ENCODE measurements at regions of chr6 and their contacts with region 1.

Region 1: GRCh38 chr6:72619883-72620696 is 1.8 kb upstream of the KCNQ5 start:
- DNase-seq: no peak
- H3K4me3 ChIP-seq: peak overlapping the region; percentile 30 to 52
- H3K27ac ChIP-seq: no peak overlapping the region
- H3K4me1 ChIP-seq: peaks cover 37% of the 10 kb centered on the region
- H3K27me3 ChIP-seq: no peaks in the 10 kb centered on the region
- CTCF ChIP-seq: no peak
- POLR2A ChIP-seq: no peak

Region 2: DNA sequence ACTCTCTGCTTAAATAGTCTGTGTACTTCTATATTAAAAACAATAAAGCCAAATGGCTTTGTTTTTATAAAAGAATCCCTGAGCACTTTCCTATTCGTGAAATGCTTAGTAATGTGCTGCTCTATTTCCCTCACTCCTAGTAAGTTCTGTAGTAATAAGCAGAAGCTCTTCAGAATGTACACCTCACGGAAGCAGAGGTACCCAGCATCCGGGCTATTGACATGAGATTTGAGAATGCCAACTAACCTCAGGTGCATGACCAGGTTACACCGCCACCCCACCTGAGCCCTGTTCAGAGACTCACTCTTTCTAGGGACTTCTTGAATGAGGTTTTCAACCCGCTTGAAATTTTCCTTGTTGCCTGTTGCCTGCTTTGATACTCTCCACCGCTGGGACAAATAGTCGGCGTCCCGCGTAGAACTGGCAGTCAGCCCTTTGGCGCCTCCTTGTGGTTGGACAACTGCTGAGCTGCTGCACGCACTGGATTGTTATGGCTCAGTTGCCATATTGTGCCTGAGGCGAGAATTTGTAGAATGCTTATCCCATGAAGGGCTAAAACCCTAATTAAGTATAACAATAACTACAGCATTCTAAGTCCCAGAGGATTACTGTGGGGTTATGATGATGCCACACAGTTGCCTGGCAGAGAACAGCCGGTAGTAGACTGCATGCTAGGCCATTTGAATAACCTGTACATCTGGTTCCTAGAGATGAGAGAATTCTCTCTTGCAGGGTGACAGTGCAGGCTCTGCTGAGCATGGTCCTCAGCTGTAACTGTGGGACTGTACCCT is 509.8 kb after region 1 on chr6:
- intact Hi-C with region 1: loop called (anchors 5 kb)
- DNase-seq: no peak
- H3K4me3 ChIP-seq: no peak overlapping the region
- H3K27ac ChIP-seq: no peak overlapping the region
- H3K4me1 ChIP-seq: no peaks in the 10 kb centered on the region
- H3K27me3 ChIP-seq: no peaks in the 10 kb centered on the region
- CTCF ChIP-seq: peak; percentile 51 to 71 (median 60)
- POLR2A ChIP-seq: no peak